ENCODE measurements at regions of chr22 and their contacts with region 1.

Region 1: GRCh38 chr22:42933481-42934091 is 76.5 kb upstream of the ARFGAP3 start:
- DNase-seq: peak; percentile 59
- ATAC-seq: peak; percentile 73
- H3K4me3 Mint-ChIP-seq: peak overlapping the region; percentile 82
- H3K27ac Mint-ChIP-seq: peak overlapping the region; percentile 98
- H3K4me1 Mint-ChIP-seq: peaks cover 99% of the 10 kb centered on the region
- H3K27me3 Mint-ChIP-seq: no peaks in the 10 kb centered on the region
- CTCF ChIP-seq: no peak

Region 2: GRCh38 chr22:42856865-42857704 is 76.5 kb before region 1 on chr22 and contains the start of gene ARFGAP3:
- CTCF ChIA-PET with region 1: no interaction called
- POLR2A ChIA-PET with region 1: interaction called, 3 read pairs
- intact Hi-C with region 1: loop called (anchors 1 kb)
- DNase-seq: peak; percentile 99
- ATAC-seq: peak; percentile 93
- H3K4me3 Mint-ChIP-seq: peak within 1 kb of the TSS; percentile 86
- H3K27ac Mint-ChIP-seq: peak within 1 kb of the TSS; percentile 80
- H3K4me1 Mint-ChIP-seq: peaks cover 35% of the 10 kb centered on the region
- H3K27me3 Mint-ChIP-seq: no peaks in the 10 kb centered on the region
- CTCF ChIP-seq: no peak
- total RNA-seq, gene ARFGAP3: 35.2 and 37.3 TPM in 2 replicates

Region 3: DNA sequence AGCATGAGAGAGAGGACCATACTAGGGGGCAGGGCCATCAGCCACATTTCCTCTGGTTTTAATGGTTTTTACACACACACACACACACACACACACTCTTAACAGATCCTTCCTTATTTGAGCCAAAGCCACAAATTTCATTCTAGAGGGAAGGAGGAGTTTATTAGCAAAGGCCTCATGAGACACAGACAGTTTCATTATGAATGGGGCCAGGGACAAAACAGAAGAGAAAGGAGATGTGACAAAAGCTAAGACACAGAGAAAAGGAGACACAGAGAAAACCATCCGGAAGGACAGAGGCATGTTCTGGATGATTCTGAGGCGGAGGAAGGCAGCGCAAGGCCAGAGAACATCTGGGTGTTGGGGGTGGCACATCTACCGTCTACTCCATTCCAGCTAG is 44.3 kb before region 1 on chr22:
- CTCF ChIA-PET with region 1: interaction called, 3 read pairs
- POLR2A ChIA-PET with region 1: interaction called, 9 read pairs
- intact Hi-C with region 1: loop called (anchors 1 kb)
- DNase-seq: no peak
- ATAC-seq: peak; percentile 88
- H3K4me3 Mint-ChIP-seq: peak overlapping the region; percentile 77
- H3K27ac Mint-ChIP-seq: peak overlapping the region; percentile 90
- H3K4me1 Mint-ChIP-seq: peaks cover 68% of the 10 kb centered on the region
- H3K27me3 Mint-ChIP-seq: no peaks in the 10 kb centered on the region
- CTCF ChIP-seq: no peak

Region 4: GRCh38 chr22:42919199-42919598 is 14.4 kb before region 1 on chr22:
- CTCF ChIA-PET with region 1: interaction called, 5 read pairs
- POLR2A ChIA-PET with region 1: interaction called, 10 read pairs
- intact Hi-C with region 1: loop called (anchors 1 kb)
- DNase-seq: no peak
- ATAC-seq: peak; percentile 22
- H3K4me3 Mint-ChIP-seq: no peak overlapping the region
- H3K27ac Mint-ChIP-seq: peak overlapping the region; percentile 30
- H3K4me1 Mint-ChIP-seq: peaks cover 51% of the 10 kb centered on the region
- H3K27me3 Mint-ChIP-seq: no peaks in the 10 kb centered on the region
- CTCF ChIP-seq: no peak

Region 5: GRCh38 chr22:43066844-43067385 is 133.3 kb after region 1 on chr22:
- CTCF ChIA-PET with region 1: no interaction called
- POLR2A ChIA-PET with region 1: no interaction called
- intact Hi-C with region 1: no loop called
- DNase-seq: no peak
- ATAC-seq: no peak
- H3K4me3 Mint-ChIP-seq: no peak overlapping the region
- H3K27ac Mint-ChIP-seq: no peak overlapping the region
- H3K4me1 Mint-ChIP-seq: no peaks in the 10 kb centered on the region
- H3K27me3 Mint-ChIP-seq: no peaks in the 10 kb centered on the region
- CTCF ChIP-seq: no peak

Measured in activated B cell treated with CpG ODN at 0.5 μM for 24 hours (primary cell).